Dorsolateral prefrontal cortex (tissue), 120 donors: ENCODE measurements at regions of chr9 and their contacts with region 1.

Region 1: GRCh38 chr9:14395317-14396082 is 81.6 kb upstream of the NFIB start:
- DNase-seq: peak; percentile 46 to 93 (median 78)
- H3K4me3 ChIP-seq: peak overlapping the region in 58 of 59 donors; percentile 5 to 69 (median 38)
- H3K27ac ChIP-seq: peak overlapping the region; percentile 3 to 95 (median 84)
- H3K27me3 ChIP-seq: no peaks in the 10 kb centered on the region
- CTCF ChIP-seq: peak in 5 of 56 donors; percentile 6 to 40 (median 18)

Region 2: DNA sequence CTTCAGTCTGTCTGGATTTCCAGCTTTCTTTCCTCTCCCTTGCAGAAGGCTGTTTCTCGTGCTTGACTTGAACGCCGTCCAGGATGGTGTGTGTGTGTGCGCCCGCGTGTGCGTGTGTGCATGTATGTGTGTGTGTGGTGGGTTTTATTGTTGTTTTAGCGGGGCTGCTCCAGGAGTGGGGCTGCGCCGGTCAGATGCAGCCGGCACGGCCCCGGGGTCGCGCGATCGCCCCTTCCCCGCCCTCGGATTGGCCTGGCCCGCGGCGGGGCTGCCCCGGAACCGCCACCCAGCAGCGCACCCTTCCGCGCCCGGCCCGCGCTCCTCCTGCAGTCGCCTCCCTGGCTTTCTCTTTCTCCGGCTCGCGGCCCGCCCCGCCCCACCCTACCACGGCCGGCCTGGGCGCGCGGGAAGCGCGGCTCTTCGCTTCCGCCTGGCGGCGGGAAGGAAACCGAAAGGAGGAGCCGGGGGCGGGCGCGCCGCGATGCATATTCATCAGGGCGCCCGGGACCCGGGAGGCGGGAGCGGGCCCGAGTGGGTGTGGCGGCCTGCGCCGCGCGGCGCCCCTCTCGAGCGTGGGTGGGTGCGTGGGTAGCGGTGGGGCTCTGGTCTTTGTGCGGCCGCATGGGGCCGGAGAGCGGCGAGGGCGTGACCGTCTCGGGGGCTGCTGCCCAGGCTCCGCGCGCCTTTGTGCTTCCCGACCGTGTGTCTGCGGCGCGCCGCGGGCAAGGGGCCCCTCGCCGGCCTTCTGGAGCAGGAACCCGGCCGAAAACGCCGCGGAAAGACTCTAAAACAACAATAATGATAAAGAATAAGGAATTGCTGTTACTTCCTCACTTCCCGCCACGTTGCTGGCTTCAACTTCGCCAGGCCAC is 73.1 kb before region 1 on chr9:
- intact Hi-C with region 1: loop called (anchors 5 kb)
- DNase-seq: peak; percentile 78 to 92 (median 88)
- H3K4me3 ChIP-seq: peak overlapping the region; percentile 42 to 92 (median 75)
- H3K27ac ChIP-seq: peak overlapping the region; percentile 78 to 99 (median 96)
- H3K27me3 ChIP-seq: no peaks in the 10 kb centered on the region
- CTCF ChIP-seq: peak in 52 of 56 donors; percentile 17 to 75 (median 52)

Region 3: GRCh38 chr9:14347406-14348122 is 47.9 kb before region 1 on chr9:
- intact Hi-C with region 1: no loop called
- DNase-seq: peak in 4 of 10 donors; percentile 23 to 61 (median 46)
- H3K4me3 ChIP-seq: peak overlapping the region; percentile 37 to 81 (median 61)
- H3K27ac ChIP-seq: peak overlapping the region in 57 of 59 donors; percentile 5 to 97 (median 88)
- H3K27me3 ChIP-seq: peaks cover 0 to 51% (median 9%) of the 10 kb centered on the region in 45 donors
- CTCF ChIP-seq: peak in 16 of 56 donors; percentile 13 to 48 (median 25)